Activated naive CD4-positive, alpha-beta T cell treated with anti-CD3 and anti-CD28 coated beads for 36 hours (primary cell): ENCODE measurements at regions of chr18 and their contacts with region 1.

Region 1: GRCh38 chr18:46250084-46250811 is 146.1 kb downstream of the HAUS1 start:
- DNase-seq: peak; percentile 66
- H3K4me3 Mint-ChIP-seq: peak overlapping the region; percentile 60
- H3K27ac Mint-ChIP-seq: peak overlapping the region; percentile 88
- H3K4me1 Mint-ChIP-seq: peaks cover 58% of the 10 kb centered on the region
- H3K27me3 Mint-ChIP-seq: no peaks in the 10 kb centered on the region

Region 2: DNA sequence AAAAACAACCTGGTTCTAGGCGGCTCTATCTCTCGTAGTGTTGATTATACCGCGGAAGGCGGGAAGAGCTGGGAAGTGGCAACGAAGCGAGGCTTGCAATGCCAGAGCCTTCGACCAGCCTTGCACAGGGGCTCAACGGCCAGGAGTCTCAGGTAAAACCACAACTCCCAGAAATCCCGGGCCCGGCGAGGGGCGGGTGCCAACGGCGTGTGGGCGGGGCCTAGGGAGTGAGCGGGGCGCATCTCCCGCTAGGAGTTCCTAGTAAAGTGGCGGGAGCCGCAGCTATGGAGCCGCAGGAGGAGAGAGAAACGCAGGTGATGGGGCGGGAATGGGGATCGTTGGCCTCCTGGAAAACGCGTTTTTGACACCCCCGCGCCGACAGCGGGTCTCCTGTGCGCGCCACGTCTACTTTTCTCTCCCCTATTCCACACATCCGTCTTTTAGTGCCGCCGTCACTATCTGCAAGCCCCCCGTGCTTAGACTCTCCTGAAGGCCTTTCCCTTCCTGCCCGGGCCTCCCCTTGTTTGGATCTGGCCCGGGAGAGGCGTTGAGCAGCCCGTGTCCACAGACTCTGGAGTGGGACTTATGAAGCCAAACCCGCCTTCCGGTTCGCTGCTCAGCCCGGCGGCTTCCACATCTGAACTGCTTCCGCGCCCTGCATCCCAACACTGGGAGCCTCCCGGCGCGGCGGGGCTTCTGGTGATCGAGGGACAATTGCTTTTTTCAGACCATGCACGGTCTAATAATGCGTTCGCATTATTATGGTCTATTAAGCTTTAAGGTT is 145.9 kb before region 1 on chr18 and contains the start of gene HAUS1:
- CTCF ChIA-PET with region 1: no interaction called
- intact Hi-C with region 1: loop called (anchors 2 kb)
- DNase-seq: peak; percentile 89
- H3K4me3 Mint-ChIP-seq: peak within 1 kb of the TSS; percentile 97
- H3K27ac Mint-ChIP-seq: peak within 1 kb of the TSS; percentile 90
- H3K4me1 Mint-ChIP-seq: peaks cover 36% of the 10 kb centered on the region
- H3K27me3 Mint-ChIP-seq: no peaks in the 10 kb centered on the region
- total RNA-seq, gene HAUS1: 59.4 to 60.9 TPM

Region 3: GRCh38 chr18:46155641-46156051 is 94.6 kb before region 1 on chr18:
- CTCF ChIA-PET with region 1: no interaction called
- intact Hi-C with region 1: loop called (anchors 1 kb)
- DNase-seq: peak; percentile 66
- H3K4me3 Mint-ChIP-seq: no peak overlapping the region
- H3K27ac Mint-ChIP-seq: peak overlapping the region; percentile 89
- H3K4me1 Mint-ChIP-seq: peaks cover 63% of the 10 kb centered on the region
- H3K27me3 Mint-ChIP-seq: no peaks in the 10 kb centered on the region

Region 4: GRCh38 chr18:46199515-46200147 is 50.6 kb before region 1 on chr18:
- CTCF ChIA-PET with region 1: no interaction called
- intact Hi-C with region 1: no loop called
- DNase-seq: no peak
- H3K4me3 Mint-ChIP-seq: no peak overlapping the region
- H3K27ac Mint-ChIP-seq: peak overlapping the region; percentile 0
- H3K4me1 Mint-ChIP-seq: peaks cover 67% of the 10 kb centered on the region
- H3K27me3 Mint-ChIP-seq: no peaks in the 10 kb centered on the region

Region 5: GRCh38 chr18:46213295-46213694 is 37.0 kb before region 1 on chr18:
- CTCF ChIA-PET with region 1: interaction called, 4 read pairs
- intact Hi-C with region 1: loop called (anchors 1 kb)
- DNase-seq: no peak
- H3K4me3 Mint-ChIP-seq: no peak overlapping the region
- H3K27ac Mint-ChIP-seq: no peak overlapping the region
- H3K4me1 Mint-ChIP-seq: peaks cover 76% of the 10 kb centered on the region
- H3K27me3 Mint-ChIP-seq: no peaks in the 10 kb centered on the region

Region 6: GRCh38 chr18:46220116-46220515 is 30.1 kb before region 1 on chr18:
- CTCF ChIA-PET with region 1: interaction called, 3 read pairs
- intact Hi-C with region 1: loop called (anchors 1 kb)
- DNase-seq: no peak
- H3K4me3 Mint-ChIP-seq: no peak overlapping the region
- H3K27ac Mint-ChIP-seq: no peak overlapping the region
- H3K4me1 Mint-ChIP-seq: peaks cover 79% of the 10 kb centered on the region
- H3K27me3 Mint-ChIP-seq: no peaks in the 10 kb centered on the region

Region 7: GRCh38 chr18:47120428-47120827 is 870.2 kb after region 1 on chr18:
- CTCF ChIA-PET with region 1: no interaction called
- intact Hi-C with region 1: loop called (anchors 5 kb)
- DNase-seq: peak; percentile 34
- H3K4me3 Mint-ChIP-seq: no peak overlapping the region
- H3K27ac Mint-ChIP-seq: peak overlapping the region; percentile 2
- H3K4me1 Mint-ChIP-seq: peaks cover 27% of the 10 kb centered on the region
- H3K27me3 Mint-ChIP-seq: no peaks in the 10 kb centered on the region